H1 (cell line): ENCODE measurements at regions of chr3 and their contacts with region 1.

Region 1: GRCh38 chr3:30042274-30042859 is 564.0 kb upstream of the TGFBR2 start:
- DNase-seq: peak in 1 of 2 experiments; percentile 57
- H3K4me3 ChIP-seq: no peak overlapping the region
- H3K27ac ChIP-seq: no peak overlapping the region
- H3K4me1 ChIP-seq: peaks cover 0 to 5% (median 0%) of the 10 kb centered on the region in 4 experiments; a peak in 2 of 7 replicates
- H3K27me3 ChIP-seq: no peaks in the 10 kb centered on the region
- CTCF ChIP-seq: peak in 2 of 3 experiments; percentile 68 to 70; a peak in 3 of 4 replicates
- EP300 ChIP-seq: no peak
- POLR2A ChIP-seq: no peak
- RAD21 ChIP-seq: peak; percentile 90 to 93

Region 2: GRCh38 chr3:30084971-30085403 is 42.6 kb after region 1 on chr3:
- CTCF ChIA-PET with region 1: interaction called, 10 read pairs
- POLR2A ChIA-PET with region 1: no interaction called
- DNase-seq: peak in 1 of 2 experiments; percentile 67
- H3K4me3 ChIP-seq: no peak overlapping the region; a peak in 1 of 8 replicates
- H3K27ac ChIP-seq: no peak overlapping the region
- H3K4me1 ChIP-seq: peaks cover 0 to 5% (median 1%) of the 10 kb centered on the region in 4 experiments; a peak in 2 of 7 replicates
- H3K27me3 ChIP-seq: peaks cover 44 to 74% (median 66%) of the 10 kb centered on the region in 4 experiments
- CTCF ChIP-seq: no peak
- EP300 ChIP-seq: no peak
- POLR2A ChIP-seq: no peak
- RAD21 ChIP-seq: no peak; a peak in 1 of 4 replicates

Region 3: GRCh38 chr3:30167541-30168011 is 125.2 kb after region 1 on chr3:
- CTCF ChIA-PET with region 1: interaction called, 12 read pairs
- POLR2A ChIA-PET with region 1: no interaction called
- DNase-seq: no peak
- H3K4me3 ChIP-seq: no peak overlapping the region
- H3K27ac ChIP-seq: no peak overlapping the region
- H3K4me1 ChIP-seq: no peaks in the 10 kb centered on the region
- H3K27me3 ChIP-seq: no peaks in the 10 kb centered on the region
- CTCF ChIP-seq: no peak
- EP300 ChIP-seq: no peak
- POLR2A ChIP-seq: no peak
- RAD21 ChIP-seq: no peak

Region 4: GRCh38 chr3:30693470-30694120 is 651.2 kb after region 1 on chr3:
- CTCF ChIA-PET with region 1: interaction called, 39 read pairs
- POLR2A ChIA-PET with region 1: no interaction called
- DNase-seq: no peak
- H3K4me3 ChIP-seq: no peak overlapping the region
- H3K27ac ChIP-seq: no peak overlapping the region
- H3K4me1 ChIP-seq: peaks cover 0 to 13% (median 5%) of the 10 kb centered on the region in 4 experiments; a peak in 5 of 7 replicates
- H3K27me3 ChIP-seq: no peaks in the 10 kb centered on the region
- CTCF ChIP-seq: peak in 2 of 3 experiments; percentile 80 to 85; a peak in 3 of 4 replicates
- EP300 ChIP-seq: no peak
- POLR2A ChIP-seq: no peak
- RAD21 ChIP-seq: peak; percentile 99